Thyroid gland (tissue), 4 donors: ENCODE measurements at regions of chr2 and their contacts with region 1.

Region 1: GRCh38 chr2:95231723-95232122 is 24.4 kb downstream of the ZNF892 start:
- DNase-seq: peak; percentile 86 to 91
- H3K4me3 ChIP-seq: no peak overlapping the region
- H3K27ac ChIP-seq: peak overlapping the region; percentile 54 to 67 (median 56)
- H3K4me1 ChIP-seq: peaks cover 10 to 30% of the 10 kb centered on the region in 2 donors
- H3K27me3 ChIP-seq: no peaks in the 10 kb centered on the region
- CTCF ChIP-seq: peak; percentile 56 to 96 (median 84)
- POLR2A ChIP-seq: no peak

Region 2: DNA sequence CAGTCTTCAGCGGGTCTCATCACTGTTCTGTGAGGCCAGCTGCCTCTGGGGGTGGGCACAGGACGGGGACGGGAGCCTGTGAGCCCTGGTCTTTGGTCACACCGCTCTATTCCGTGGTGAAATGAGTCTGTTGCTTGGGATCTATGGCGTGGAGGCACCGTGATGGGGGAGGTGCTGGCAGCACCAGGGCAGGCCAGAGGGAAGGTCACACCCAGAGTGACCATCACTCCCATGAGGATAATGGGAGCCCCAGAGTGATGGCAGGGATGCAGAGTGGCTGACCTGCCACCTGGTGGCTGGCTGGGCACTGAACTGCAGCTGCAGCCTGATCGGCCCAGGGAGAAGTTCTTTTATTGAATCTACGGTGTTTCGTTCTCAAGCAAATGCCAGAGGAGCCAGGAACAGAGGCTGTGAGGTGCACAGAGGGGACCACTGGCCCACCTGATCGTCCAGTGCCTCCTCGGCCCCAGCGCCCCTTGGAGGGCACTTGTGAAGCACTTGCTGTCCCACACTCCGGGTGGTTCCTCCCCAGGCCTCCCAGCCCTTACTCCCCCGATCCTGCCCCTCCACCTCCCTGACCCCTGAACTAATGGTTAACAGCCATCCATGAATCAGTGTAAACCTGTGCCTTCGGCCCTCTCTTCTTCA is 83.4 kb after region 1 on chr2:
- intact Hi-C with region 1: loop called (anchors 5 kb)
- DNase-seq: peak; percentile 64 to 67
- H3K4me3 ChIP-seq: no peak overlapping the region
- H3K27ac ChIP-seq: no peak overlapping the region
- H3K4me1 ChIP-seq: peaks cover 10 to 18% of the 10 kb centered on the region in 2 donors
- H3K27me3 ChIP-seq: no peaks in the 10 kb centered on the region
- CTCF ChIP-seq: peak; percentile 39 to 89 (median 75)
- POLR2A ChIP-seq: no peak